B cell (primary cell): ENCODE measurements at regions of chr7 and their contacts with region 1.

Region 1: DNA sequence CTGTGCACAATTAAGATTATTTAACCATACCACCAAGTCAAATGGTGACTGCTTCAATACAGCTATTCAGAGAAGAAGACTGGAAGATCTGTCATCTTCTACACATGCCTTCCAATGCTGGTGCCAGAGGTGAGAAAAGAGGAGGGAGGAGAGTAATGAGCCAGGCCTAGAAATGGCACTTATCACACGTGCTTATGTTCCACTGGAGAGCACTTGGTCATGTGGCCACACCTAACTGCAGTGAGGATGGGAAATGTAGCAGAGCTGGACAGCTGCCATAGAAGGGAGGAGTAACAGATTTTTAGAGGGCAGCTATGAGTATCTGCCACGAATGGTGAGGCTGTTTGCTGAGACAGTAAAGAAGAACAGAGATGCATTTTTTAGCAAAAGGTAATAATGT is 77.1 kb downstream of the MPLKIP start:
- DNase-seq: no peak
- ATAC-seq: no peak
- H3K4me3 ChIP-seq: no peak overlapping the region
- H3K4me3 Mint-ChIP-seq: no peak overlapping the region
- H3K27ac ChIP-seq: no peak overlapping the region
- H3K27ac Mint-ChIP-seq: no peak overlapping the region
- H3K4me1 ChIP-seq: no peaks in the 10 kb centered on the region
- H3K4me1 Mint-ChIP-seq: no peaks in the 10 kb centered on the region
- H3K27me3 ChIP-seq: no peaks in the 10 kb centered on the region
- H3K27me3 Mint-ChIP-seq: no peaks in the 10 kb centered on the region
- CTCF ChIP-seq: no peak

Region 2: DNA sequence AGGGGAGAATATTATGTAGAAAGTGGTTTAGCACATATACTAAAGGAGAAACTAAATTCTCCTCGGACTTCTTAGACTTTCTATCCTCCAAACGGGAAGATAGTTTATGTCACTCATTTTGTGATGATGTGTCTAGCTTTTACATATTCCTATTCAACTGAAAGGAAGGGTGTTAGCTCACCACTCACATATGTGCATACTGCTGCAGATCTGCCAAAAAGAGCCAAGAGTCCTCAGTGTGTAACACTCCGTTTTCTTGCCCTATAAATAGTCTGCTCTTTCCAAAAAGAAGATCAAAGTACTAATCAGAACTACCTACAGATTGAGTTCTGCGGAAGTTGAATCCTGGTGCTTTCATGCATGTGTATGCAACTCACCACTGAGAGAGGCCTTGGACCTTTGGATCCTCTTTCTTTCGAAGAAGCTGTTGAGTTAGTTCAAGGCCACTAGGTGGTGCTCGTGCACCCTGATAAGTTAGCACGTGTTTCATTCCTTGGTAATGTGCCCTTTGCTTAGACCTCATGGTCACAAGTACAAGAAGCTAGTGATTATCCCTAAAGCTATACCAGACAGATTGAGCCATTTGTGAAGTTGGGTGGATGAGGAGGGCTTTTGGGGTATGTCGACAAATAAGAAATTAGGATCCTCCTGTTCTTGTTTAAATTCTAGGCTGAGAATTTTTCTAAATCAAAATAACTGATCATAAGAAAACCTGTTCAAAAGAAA is 477.0 kb before region 1 on chr7:
- CTCF ChIA-PET with region 1: interaction called, 37 read pairs
- POLR2A ChIA-PET with region 1: no interaction called
- intact Hi-C with region 1: loop called (anchors 1 kb)
- DNase-seq: peak; percentile 87
- ATAC-seq: peak; percentile 95
- H3K4me3 ChIP-seq: no peak overlapping the region
- H3K4me3 Mint-ChIP-seq: no peak overlapping the region
- H3K27ac ChIP-seq: no peak overlapping the region
- H3K27ac Mint-ChIP-seq: no peak overlapping the region
- H3K4me1 ChIP-seq: no peaks in the 10 kb centered on the region
- H3K4me1 Mint-ChIP-seq: no peaks in the 10 kb centered on the region
- H3K27me3 ChIP-seq: no peaks in the 10 kb centered on the region
- H3K27me3 Mint-ChIP-seq: no peaks in the 10 kb centered on the region
- CTCF ChIP-seq: peak; percentile 93

Region 3: DNA sequence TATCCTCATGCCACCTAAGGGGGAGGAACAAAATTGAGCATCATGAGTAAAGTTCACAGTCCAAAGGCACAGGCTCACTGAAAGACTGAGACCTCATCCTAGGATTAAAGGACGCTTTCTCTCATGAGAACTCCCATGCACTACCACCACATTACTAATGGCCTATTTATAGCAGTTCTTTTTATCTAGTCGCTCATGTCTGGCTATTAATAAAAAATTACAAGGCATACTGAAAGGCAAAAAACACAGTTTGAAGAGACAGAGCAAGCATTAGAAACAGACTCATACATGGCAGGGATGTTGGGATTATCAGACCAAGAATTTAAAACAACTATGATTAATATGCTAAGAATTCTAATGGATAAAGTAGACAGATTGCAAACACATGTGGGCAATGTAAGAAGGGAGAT is 153.2 kb before region 1 on chr7:
- CTCF ChIA-PET with region 1: interaction called, 340 read pairs
- POLR2A ChIA-PET with region 1: no interaction called
- intact Hi-C with region 1: no loop called
- DNase-seq: no peak
- ATAC-seq: no peak
- H3K4me3 ChIP-seq: no peak overlapping the region
- H3K4me3 Mint-ChIP-seq: no peak overlapping the region
- H3K27ac ChIP-seq: no peak overlapping the region
- H3K27ac Mint-ChIP-seq: no peak overlapping the region
- H3K4me1 ChIP-seq: no peaks in the 10 kb centered on the region
- H3K4me1 Mint-ChIP-seq: no peaks in the 10 kb centered on the region
- H3K27me3 ChIP-seq: no peaks in the 10 kb centered on the region
- H3K27me3 Mint-ChIP-seq: peaks cover 10% of the 10 kb centered on the region
- CTCF ChIP-seq: no peak

Region 4: DNA sequence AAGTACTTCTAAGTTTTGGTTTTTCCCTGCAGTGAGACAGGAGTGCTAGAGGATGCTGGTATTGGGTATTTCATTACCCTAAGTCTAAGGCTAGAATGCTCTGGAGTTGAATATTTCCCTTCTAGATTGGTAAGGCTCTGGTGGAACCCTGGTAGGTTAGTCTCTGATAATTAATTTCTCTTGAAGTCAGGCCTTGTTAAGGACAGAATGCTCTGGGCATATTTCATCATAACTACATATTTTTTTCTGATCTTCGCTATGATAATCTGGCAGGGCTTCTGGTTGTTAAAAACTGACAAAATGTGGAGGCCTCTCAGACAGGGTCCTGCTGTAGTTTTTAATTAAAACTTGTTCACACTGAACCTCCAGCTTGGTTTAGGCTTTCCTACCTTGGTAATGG is 23.5 kb before region 1 on chr7:
- CTCF ChIA-PET with region 1: interaction called, 19 read pairs
- POLR2A ChIA-PET with region 1: no interaction called
- intact Hi-C with region 1: no loop called
- DNase-seq: no peak
- ATAC-seq: no peak
- H3K4me3 ChIP-seq: no peak overlapping the region
- H3K4me3 Mint-ChIP-seq: no peak overlapping the region
- H3K27ac ChIP-seq: peak overlapping the region in 1 of 2 donors; percentile 7
- H3K27ac Mint-ChIP-seq: no peak overlapping the region
- H3K4me1 ChIP-seq: peaks cover 0 to 4% of the 10 kb centered on the region in 2 donors
- H3K4me1 Mint-ChIP-seq: peaks cover 21% of the 10 kb centered on the region
- H3K27me3 ChIP-seq: no peaks in the 10 kb centered on the region
- H3K27me3 Mint-ChIP-seq: no peaks in the 10 kb centered on the region
- CTCF ChIP-seq: no peak

Region 5: GRCh38 chr7:40077849-40078248 is 20.6 kb after region 1 on chr7:
- CTCF ChIA-PET with region 1: interaction called, 13 read pairs
- POLR2A ChIA-PET with region 1: no interaction called
- intact Hi-C with region 1: no loop called
- DNase-seq: no peak
- ATAC-seq: no peak
- H3K4me3 ChIP-seq: no peak overlapping the region
- H3K4me3 Mint-ChIP-seq: no peak overlapping the region
- H3K27ac ChIP-seq: no peak overlapping the region
- H3K27ac Mint-ChIP-seq: no peak overlapping the region
- H3K4me1 ChIP-seq: no peaks in the 10 kb centered on the region
- H3K4me1 Mint-ChIP-seq: no peaks in the 10 kb centered on the region
- H3K27me3 ChIP-seq: no peaks in the 10 kb centered on the region
- H3K27me3 Mint-ChIP-seq: no peaks in the 10 kb centered on the region
- CTCF ChIP-seq: no peak

Region 6: GRCh38 chr7:40248681-40249080 is 191.4 kb after region 1 on chr7:
- CTCF ChIA-PET with region 1: no interaction called
- POLR2A ChIA-PET with region 1: no interaction called
- intact Hi-C with region 1: no loop called
- DNase-seq: no peak
- ATAC-seq: no peak
- H3K4me3 ChIP-seq: no peak overlapping the region
- H3K4me3 Mint-ChIP-seq: no peak overlapping the region
- H3K27ac ChIP-seq: no peak overlapping the region
- H3K27ac Mint-ChIP-seq: no peak overlapping the region
- H3K4me1 ChIP-seq: no peaks in the 10 kb centered on the region
- H3K4me1 Mint-ChIP-seq: no peaks in the 10 kb centered on the region
- H3K27me3 ChIP-seq: no peaks in the 10 kb centered on the region
- H3K27me3 Mint-ChIP-seq: no peaks in the 10 kb centered on the region
- CTCF ChIP-seq: no peak